ENCODE measurements at regions of chr6 and their contacts with region 1.

Region 1: DNA sequence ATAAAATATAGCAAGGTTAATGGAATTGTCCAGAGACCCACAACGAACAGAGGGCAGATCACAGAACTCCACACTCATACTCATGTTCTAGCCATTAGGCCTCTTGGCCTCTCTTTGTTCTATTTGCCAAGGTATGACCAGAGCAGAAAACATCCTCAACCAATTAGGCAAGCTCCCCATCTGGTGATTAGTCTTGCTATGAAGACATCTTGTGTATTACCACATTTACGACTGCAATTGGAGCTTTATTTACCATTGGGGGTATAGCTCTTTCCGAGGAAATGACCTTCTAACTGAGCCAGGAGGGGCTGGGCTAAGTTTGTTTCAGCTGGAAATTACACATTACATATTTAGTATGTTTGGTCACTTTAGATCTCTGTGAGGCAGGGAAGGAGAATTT is 593.9 kb downstream of the CD109 start:
- DNase-seq: no peak

Region 2: GRCh38 chr6:73832313-73832712 is 457.6 kb before region 1 on chr6:
- intact Hi-C with region 1: loop called in 1 of 2 experiments (anchors 10 kb)
- DNase-seq: no peak